ENCODE measurements at regions of chr16 and their contacts with region 1.

Region 1: DNA sequence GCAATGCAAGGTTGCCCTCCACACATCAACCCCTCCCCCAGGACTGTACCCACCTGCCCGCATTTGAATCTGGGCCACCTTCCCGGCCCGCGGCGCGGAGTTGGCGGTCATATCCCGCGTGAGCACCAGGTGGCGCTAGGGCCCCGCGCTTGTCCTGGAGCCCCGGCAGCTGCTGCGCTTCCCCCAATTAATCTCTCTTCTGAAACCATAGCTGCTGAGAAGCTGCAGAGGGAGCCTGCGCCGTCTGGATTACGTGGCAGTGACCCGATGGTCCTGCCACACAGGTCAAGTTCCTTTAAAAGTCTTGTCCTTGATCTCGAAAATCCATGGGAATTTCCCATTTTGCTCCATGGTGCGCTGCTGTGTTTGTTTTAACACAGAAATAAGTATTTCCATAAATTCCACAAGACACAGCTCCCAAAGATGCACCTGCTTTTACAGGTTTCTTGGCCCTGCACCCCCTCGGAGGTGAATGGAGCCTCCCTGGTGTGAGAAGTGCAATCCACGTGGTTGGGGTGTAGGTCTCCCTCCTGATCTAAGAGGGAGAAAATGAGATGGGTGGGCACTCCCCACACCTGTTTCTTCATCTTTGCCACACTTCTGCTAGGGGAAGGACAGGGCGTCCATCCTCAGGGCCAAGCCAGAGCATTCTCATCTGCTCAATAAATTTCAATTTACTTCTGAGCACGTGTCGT is 22.1 kb downstream of the COX4I1 start:
- DNase-seq: peak; percentile 49
- H3K4me3 ChIP-seq: no peak overlapping the region
- H3K27ac ChIP-seq: no peak overlapping the region
- H3K4me1 ChIP-seq: no peaks in the 10 kb centered on the region
- H3K27me3 ChIP-seq: peaks cover 1% of the 10 kb centered on the region
- CTCF ChIP-seq: peak; percentile 68 to 95

Region 2: GRCh38 chr16:85894266-85894665 is 72.7 kb after region 1 on chr16:
- CTCF ChIA-PET with region 1: no interaction called
- dilution Hi-C with region 1: no loop called
- in situ Hi-C with region 1: no loop called
- intact Hi-C with region 1: loop called (anchors 1 kb)
- DNase-seq: no peak
- H3K4me3 ChIP-seq: no peak overlapping the region
- H3K27ac ChIP-seq: no peak overlapping the region
- H3K4me1 ChIP-seq: no peaks in the 10 kb centered on the region
- H3K27me3 ChIP-seq: peaks cover 19% of the 10 kb centered on the region
- CTCF ChIP-seq: peak in 1 of 2 donors; percentile 17

Region 3: GRCh38 chr16:85986931-85987749 is 165.6 kb after region 1 on chr16:
- CTCF ChIA-PET with region 1: interaction called, 19 read pairs
- dilution Hi-C with region 1: no loop called
- in situ Hi-C with region 1: no loop called
- intact Hi-C with region 1: loop called (anchors 1 kb)
- DNase-seq: no peak
- H3K4me3 ChIP-seq: no peak overlapping the region
- H3K27ac ChIP-seq: no peak overlapping the region
- H3K4me1 ChIP-seq: no peaks in the 10 kb centered on the region
- H3K27me3 ChIP-seq: no peaks in the 10 kb centered on the region
- CTCF ChIP-seq: peak in 1 of 2 donors; percentile 37

Region 4: GRCh38 chr16:86016201-86016871 is 194.7 kb after region 1 on chr16:
- CTCF ChIA-PET with region 1: interaction called, 5 read pairs
- dilution Hi-C with region 1: no loop called
- in situ Hi-C with region 1: loop called (anchors 5 kb)
- intact Hi-C with region 1: loop called (anchors 1 kb)
- DNase-seq: peak; percentile 34
- H3K4me3 ChIP-seq: no peak overlapping the region
- H3K27ac ChIP-seq: no peak overlapping the region
- H3K4me1 ChIP-seq: no peaks in the 10 kb centered on the region
- H3K27me3 ChIP-seq: no peaks in the 10 kb centered on the region
- CTCF ChIP-seq: peak; percentile 56 to 83

Region 5: DNA sequence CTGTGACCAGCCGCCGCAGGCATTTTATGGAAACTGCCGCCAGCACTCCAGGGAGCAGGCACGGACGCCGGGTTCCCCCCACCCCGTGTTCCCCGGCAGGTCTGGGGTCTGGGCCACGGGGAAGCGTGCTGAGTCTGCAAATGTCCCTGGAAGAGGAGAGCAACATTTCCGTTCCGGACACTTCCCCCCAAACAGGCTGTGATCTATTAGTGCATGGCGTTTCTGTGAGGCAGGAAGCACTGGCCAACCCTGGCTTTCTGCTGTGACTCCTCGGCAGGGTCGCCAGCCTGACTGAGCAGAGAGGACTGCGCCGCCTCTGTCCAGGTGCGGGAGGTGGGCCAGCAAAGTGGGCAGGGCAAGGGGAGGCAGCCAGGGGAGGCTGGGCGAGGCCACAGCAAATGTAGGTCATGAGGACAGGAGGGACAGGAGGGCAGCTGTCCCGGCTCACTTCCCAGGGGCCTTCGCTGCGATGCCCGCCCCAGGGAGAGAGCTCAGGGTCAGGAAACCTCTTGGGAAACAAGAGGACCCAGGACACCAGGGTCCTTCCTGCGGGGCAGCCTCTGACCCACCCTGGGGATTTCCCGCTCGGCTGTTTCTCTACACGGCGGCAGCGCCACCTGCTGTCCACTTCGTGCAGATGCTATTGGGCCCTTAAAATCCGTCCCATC is 698.2 kb after region 1 on chr16:
- CTCF ChIA-PET with region 1: interaction called, 6 read pairs
- dilution Hi-C with region 1: no loop called
- in situ Hi-C with region 1: loop called (anchors 10 kb)
- intact Hi-C with region 1: loop called (anchors 1 kb)
- DNase-seq: no peak
- H3K4me3 ChIP-seq: no peak overlapping the region
- H3K27ac ChIP-seq: no peak overlapping the region
- H3K4me1 ChIP-seq: no peaks in the 10 kb centered on the region
- H3K27me3 ChIP-seq: peaks cover 28% of the 10 kb centered on the region
- CTCF ChIP-seq: peak; percentile 83 to 89

Measured in mammary epithelial cell (primary cell).